ENCODE measurements at regions of chr2 and their contacts with region 1.

Region 1: GRCh38 chr2:10408649-10409579 is 39.2 kb downstream of the ODC1 start:
- DNase-seq: peak; percentile 89
- H3K4me3 Mint-ChIP-seq: peak overlapping the region; percentile 59
- H3K27ac Mint-ChIP-seq: peak overlapping the region; percentile 97
- H3K4me1 Mint-ChIP-seq: peaks cover 46% of the 10 kb centered on the region
- H3K27me3 Mint-ChIP-seq: no peaks in the 10 kb centered on the region

Region 2: GRCh38 chr2:9778012-9778411 is 630.9 kb before region 1 on chr2:
- CTCF ChIA-PET with region 1: no interaction called
- intact Hi-C with region 1: loop called (anchors 1 kb)
- DNase-seq: peak; percentile 42
- H3K4me3 Mint-ChIP-seq: no peak overlapping the region
- H3K27ac Mint-ChIP-seq: no peak overlapping the region
- H3K4me1 Mint-ChIP-seq: peaks cover 40% of the 10 kb centered on the region
- H3K27me3 Mint-ChIP-seq: no peaks in the 10 kb centered on the region

Region 3: GRCh38 chr2:10162586-10163497 is 246.1 kb before region 1 on chr2:
- CTCF ChIA-PET with region 1: interaction called, 18 read pairs
- intact Hi-C with region 1: no loop called
- DNase-seq: no peak
- H3K4me3 Mint-ChIP-seq: no peak overlapping the region
- H3K27ac Mint-ChIP-seq: no peak overlapping the region
- H3K4me1 Mint-ChIP-seq: peaks cover 8% of the 10 kb centered on the region
- H3K27me3 Mint-ChIP-seq: no peaks in the 10 kb centered on the region

Region 4: GRCh38 chr2:10302479-10303180 is 106.3 kb before region 1 on chr2 and contains the start of gene HPCAL1:
- CTCF ChIA-PET with region 1: interaction called, 125 read pairs
- intact Hi-C with region 1: loop called (anchors 1 kb)
- DNase-seq: peak; percentile 84
- H3K4me3 Mint-ChIP-seq: peak within 1 kb of the TSS; percentile 99
- H3K27ac Mint-ChIP-seq: peak within 1 kb of the TSS; percentile 83
- H3K4me1 Mint-ChIP-seq: peaks cover 71% of the 10 kb centered on the region
- H3K27me3 Mint-ChIP-seq: no peaks in the 10 kb centered on the region
- total RNA-seq, gene HPCAL1: 71.4 to 73.8 TPM

Region 5: GRCh38 chr2:10375570-10376281 is 33.2 kb before region 1 on chr2:
- CTCF ChIA-PET with region 1: interaction called, 24 read pairs
- intact Hi-C with region 1: no loop called
- DNase-seq: peak; percentile 61
- H3K4me3 Mint-ChIP-seq: no peak overlapping the region
- H3K27ac Mint-ChIP-seq: peak overlapping the region; percentile 28
- H3K4me1 Mint-ChIP-seq: peaks cover 75% of the 10 kb centered on the region
- H3K27me3 Mint-ChIP-seq: no peaks in the 10 kb centered on the region

Region 6: DNA sequence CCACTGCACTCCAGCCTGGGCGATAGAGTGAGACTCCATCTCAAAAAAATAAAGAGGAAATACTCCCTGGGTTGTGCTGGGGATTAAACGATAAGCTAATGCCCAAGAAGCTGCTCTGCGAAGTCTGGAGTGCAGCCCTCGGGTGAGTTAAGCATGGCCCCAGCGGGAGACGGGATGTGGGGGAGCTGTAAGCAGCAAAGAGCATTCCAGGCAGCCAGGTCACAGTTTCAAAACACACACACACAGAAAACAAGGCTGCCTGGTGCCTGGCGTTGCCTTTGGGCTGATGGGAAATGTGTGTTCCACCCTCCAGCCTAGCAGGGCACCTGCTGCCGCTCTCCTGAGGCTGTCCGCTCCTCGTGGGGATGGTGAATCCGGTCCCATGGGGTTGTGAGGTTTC is 15.1 kb after region 1 on chr2:
- CTCF ChIA-PET with region 1: interaction called, 13 read pairs
- intact Hi-C with region 1: no loop called
- DNase-seq: no peak
- H3K4me3 Mint-ChIP-seq: no peak overlapping the region
- H3K27ac Mint-ChIP-seq: no peak overlapping the region
- H3K4me1 Mint-ChIP-seq: no peaks in the 10 kb centered on the region
- H3K27me3 Mint-ChIP-seq: no peaks in the 10 kb centered on the region

Region 7: DNA sequence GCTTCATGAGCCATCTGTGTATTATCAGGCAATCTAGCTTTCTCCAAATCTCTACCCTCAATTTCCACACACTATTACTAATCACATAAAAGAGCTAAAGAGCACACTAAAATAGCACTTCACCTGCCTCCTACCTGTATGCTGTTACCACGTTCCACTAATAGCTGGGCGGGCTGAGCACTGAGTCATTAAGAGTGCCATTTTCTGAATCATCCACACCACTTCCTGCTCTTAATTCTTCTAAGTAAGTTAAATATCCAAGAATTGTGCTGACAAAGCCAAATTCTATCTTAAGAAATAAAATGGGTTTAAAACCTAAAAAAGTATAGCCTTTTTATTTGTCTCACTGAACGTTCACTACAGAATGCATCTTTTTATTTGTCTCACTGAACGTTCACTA is 245.2 kb after region 1 on chr2:
- CTCF ChIA-PET with region 1: no interaction called
- intact Hi-C with region 1: loop called (anchors 1 kb)
- DNase-seq: peak; percentile 87
- H3K4me3 Mint-ChIP-seq: peak overlapping the region; percentile 29
- H3K27ac Mint-ChIP-seq: peak overlapping the region; percentile 92
- H3K4me1 Mint-ChIP-seq: peaks cover 46% of the 10 kb centered on the region
- H3K27me3 Mint-ChIP-seq: no peaks in the 10 kb centered on the region

Measured in activated naive CD4-positive, alpha-beta T cell treated with anti-CD3 and anti-CD28 coated beads for 36 hours (primary cell).